Activated naive CD4-positive, alpha-beta T cell treated with anti-CD3 and anti-CD28 coated beads for 36 hours (primary cell): ENCODE measurements at regions of chr4 and their contacts with region 1.

Region 1: DNA sequence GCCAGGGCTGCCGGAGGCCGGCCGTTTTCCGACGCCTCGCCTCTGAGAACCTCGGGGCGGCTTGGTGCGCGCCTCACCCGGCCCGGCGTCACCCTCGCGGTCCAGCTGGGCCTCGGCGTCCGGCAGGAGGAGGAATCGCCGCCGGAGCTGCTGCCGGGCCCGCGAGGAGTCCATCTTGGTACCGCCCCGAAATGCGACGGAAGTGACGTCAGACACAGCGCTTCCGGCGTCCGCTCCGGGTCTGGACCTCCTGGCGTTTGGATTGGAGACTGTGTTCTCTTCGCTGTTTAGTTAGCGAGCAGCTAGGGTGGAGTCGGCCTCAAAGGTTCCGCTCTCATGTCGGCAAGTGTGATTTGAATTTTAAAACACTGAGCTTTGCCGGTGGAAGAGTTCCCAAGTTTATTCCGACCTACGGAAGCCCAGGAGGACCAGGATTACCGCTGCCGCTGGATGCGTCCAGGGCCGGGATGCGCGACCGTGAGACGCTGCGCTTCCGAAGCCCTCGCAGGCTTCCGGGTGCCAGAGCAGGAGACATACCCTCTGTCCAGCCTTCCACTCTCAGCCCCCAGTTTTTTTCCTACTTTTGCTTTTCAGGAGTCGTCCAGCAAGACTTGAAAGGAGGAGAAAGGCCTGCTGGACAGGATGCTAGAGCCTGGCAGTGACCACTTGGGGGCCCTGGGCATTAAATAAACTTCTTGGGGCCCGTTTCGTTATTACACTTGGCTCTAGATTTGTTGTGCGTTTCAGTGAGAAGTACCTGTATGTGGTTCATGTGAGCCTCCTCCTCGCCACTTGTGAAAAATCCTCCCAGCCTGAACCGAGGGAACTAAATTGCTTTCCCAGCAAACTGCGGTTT is at the start of gene TMEM128:
- DNase-seq: peak; percentile 94
- H3K4me3 Mint-ChIP-seq: peak within 1 kb of the TSS; percentile 95
- H3K27ac Mint-ChIP-seq: peak within 1 kb of the TSS; percentile 97
- H3K4me1 Mint-ChIP-seq: peaks cover 27% of the 10 kb centered on the region
- H3K27me3 Mint-ChIP-seq: no peaks in the 10 kb centered on the region
- total RNA-seq, gene TMEM128: 21.7 to 22.0 TPM

Region 2: DNA sequence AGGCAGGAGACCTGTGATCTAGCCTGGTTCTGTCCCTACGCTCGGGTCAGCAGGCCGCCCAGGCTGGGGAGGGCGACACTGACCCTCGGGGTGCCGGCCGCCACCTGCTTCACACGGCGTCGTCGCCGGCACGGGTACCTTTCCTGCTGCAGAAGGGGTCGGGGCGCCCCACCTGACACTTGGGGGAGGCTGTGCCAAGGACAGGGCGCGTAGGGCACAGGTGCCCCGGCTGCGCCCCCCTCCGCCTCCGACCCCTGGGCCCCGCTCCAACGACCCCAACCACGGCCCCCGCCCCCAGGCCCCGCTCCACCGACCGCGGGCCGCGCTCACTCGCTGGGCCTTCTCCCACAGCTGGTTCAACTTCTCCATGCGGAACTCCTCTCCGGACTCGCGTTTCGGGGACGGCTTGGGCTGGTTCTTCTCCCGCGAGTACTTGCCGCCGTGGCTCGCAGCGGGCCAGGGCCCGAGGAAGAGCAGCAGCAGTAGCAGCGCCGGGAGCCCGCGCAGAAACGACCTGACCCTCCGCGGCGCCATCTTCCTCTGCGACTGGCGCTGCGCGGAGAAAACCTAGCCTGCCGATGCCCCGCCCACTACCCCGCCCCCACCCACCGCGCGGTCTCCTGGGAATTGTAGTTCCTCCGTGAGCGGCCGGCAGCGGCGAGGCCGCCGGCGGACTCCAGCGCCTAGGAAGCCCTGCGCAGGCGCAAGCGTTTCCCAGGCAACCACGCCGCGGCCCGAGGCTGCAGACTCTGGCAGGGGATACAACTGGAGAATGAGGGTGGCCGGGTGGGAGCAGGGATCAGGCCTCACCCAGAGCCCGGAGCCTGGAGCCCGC is 716.2 kb before region 1 on chr4 and contains the start of gene LRPAP1:
- CTCF ChIA-PET with region 1: no interaction called
- intact Hi-C with region 1: loop called (anchors 5 kb)
- DNase-seq: peak; percentile 83
- H3K4me3 Mint-ChIP-seq: peak within 1 kb of the TSS; percentile 100
- H3K27ac Mint-ChIP-seq: peak within 1 kb of the TSS; percentile 90
- H3K4me1 Mint-ChIP-seq: peaks cover 32% of the 10 kb centered on the region
- H3K27me3 Mint-ChIP-seq: peaks cover 6% of the 10 kb centered on the region
- total RNA-seq, gene LRPAP1: 50.2 TPM

Region 3: GRCh38 chr4:4200624-4201023 is 47.6 kb before region 1 on chr4:
- CTCF ChIA-PET with region 1: no interaction called
- intact Hi-C with region 1: no loop called
- DNase-seq: no peak
- H3K4me3 Mint-ChIP-seq: no peak overlapping the region
- H3K27ac Mint-ChIP-seq: no peak overlapping the region
- H3K4me1 Mint-ChIP-seq: no peaks in the 10 kb centered on the region
- H3K27me3 Mint-ChIP-seq: peaks cover 13% of the 10 kb centered on the region

Region 4: DNA sequence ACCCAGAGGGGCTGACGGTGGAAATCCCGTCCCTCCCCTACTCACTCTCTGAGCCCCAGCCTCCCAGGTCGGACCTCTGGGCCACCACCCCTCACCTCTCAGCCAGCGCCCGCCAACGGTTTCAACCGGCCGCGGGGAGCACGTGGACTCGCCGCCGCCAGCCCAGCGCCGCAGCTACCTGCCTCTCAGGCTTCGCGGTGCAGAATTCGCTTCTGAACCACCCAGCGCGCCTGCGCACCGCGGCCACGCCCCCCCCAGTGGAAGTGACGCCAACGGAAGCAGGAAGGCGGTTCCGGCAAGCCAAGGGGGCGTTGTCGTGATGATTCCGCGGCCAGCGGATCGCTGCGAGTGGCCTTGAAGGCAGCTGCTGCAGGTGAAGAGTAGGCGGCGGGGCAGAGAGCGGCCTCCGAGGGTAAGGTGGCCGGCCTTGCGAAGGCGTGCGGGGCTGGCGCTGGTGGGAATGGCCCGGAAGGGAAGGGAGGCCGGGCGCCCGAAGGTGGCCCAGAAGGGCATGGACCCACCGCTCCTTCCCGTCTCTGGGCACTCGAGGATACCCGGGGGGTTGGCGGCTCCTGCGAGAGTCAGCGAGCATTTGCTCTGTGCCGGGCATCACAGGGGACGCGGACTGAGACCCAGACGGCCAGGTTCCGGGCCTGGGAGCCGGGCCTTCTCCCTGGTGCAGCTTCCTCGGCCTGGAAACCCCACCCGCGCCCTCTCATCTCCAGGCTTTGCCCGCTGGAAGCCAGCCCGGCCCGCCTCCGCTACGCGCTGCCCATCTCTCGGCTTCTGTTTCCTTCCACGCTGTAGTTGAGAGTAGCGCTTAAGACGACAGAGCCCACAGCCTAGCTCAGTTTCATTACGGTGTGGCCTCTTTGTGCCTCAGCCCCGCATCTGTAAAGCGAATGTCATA is 41.9 kb after region 1 on chr4 and contains the starts of genes LYAR and ZBTB49:
- CTCF ChIA-PET with region 1: no interaction called
- intact Hi-C with region 1: loop called (anchors 1 kb)
- DNase-seq: peak; percentile 96
- H3K4me3 Mint-ChIP-seq: peak within 1 kb of the TSS; percentile 95
- H3K27ac Mint-ChIP-seq: peak within 1 kb of the TSS; percentile 78
- H3K4me1 Mint-ChIP-seq: peaks cover 55% of the 10 kb centered on the region
- H3K27me3 Mint-ChIP-seq: no peaks in the 10 kb centered on the region
- total RNA-seq, gene LYAR: 42.3 to 42.4 TPM
- total RNA-seq, gene ZBTB49: 4.2 to 4.5 TPM

Region 5: DNA sequence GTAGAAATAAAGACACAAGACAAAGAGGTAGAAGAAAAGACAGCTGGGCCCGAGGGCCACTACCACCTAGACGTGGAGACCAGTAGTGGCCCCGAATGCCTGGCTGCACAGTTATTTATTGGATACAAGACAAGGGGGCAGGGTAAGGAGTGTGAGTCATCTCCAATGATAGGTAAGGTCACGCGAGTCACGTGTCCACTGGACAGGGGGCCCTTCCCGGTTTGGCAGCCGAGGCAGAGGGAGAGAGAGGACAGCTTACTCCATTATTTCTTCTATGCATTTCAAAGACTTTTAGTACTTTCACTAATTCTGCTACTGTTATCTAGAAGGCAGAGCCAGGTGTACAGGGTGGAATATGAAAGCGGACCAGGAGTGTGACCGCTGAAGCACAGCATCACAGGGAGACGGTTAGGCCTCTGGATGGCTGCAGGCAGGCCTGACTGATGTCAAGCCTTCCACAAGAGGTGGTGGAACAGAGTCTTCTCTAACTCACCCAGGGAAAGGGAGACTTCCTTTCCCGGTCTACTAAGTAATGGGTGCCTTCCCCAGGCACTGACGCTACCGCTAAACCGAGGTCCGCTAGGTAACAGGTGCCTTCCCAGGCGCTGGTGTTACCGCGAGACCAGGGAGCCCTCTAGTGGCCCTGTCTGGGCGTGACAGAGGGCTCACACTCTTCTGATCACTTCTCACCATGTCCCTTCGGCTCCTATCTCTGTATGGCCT is 86.7 kb after region 1 on chr4:
- CTCF ChIA-PET with region 1: interaction called, 15 read pairs
- intact Hi-C with region 1: loop called (anchors 1 kb)
- DNase-seq: peak; percentile 88
- H3K4me3 Mint-ChIP-seq: no peak overlapping the region
- H3K27ac Mint-ChIP-seq: no peak overlapping the region
- H3K4me1 Mint-ChIP-seq: peaks cover 8% of the 10 kb centered on the region
- H3K27me3 Mint-ChIP-seq: no peaks in the 10 kb centered on the region

Region 6: GRCh38 chr4:4430492-4431197 is 182.4 kb after region 1 on chr4:
- CTCF ChIA-PET with region 1: interaction called, 3 read pairs
- intact Hi-C with region 1: loop called (anchors 2 kb)
- DNase-seq: peak; percentile 69
- H3K4me3 Mint-ChIP-seq: no peak overlapping the region
- H3K27ac Mint-ChIP-seq: no peak overlapping the region
- H3K4me1 Mint-ChIP-seq: peaks cover 5% of the 10 kb centered on the region
- H3K27me3 Mint-ChIP-seq: no peaks in the 10 kb centered on the region

Region 7: DNA sequence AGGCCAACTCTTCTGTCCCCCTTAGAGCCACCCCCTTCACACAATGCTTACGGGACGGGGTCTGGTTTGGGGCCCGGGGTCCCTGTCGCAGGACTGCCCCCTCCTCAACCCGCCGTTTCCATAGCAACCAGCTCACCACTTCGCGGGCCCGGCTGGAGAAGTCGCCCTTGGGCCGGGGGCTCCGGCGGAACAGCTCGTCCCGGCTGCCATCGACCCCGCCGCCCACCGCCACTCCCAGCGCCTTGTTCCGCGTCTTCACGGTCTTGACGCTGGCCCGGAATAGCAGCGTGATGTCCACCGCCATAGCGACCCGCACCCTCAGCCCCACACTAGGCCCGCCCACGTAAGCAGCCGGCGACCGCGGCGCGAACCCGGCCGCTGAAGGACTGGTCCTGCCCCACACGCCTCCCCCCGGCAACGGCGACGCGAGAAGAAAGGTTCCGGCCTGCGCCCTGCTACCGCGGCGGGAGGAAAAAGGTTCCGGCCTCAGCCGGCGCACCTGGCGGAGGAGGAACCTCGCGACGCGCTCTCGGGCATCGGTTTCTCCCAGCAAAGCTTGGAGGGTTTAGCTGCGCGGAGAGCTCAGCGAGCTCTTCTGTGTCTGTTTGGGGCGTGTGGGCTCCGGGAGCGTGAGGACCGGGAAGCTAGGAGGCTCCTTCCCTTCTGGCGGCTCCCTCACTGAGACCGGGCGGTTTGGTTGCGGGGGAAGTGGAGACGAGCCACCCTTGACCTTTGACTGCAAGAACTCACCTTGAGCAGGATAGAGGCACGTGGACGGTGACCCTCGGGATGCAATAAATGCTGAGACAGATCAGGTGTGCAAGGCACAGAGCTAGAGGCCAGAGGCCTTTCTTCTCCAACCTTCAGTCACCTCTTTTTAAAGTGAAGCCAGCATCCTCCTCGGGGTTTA is 293.7 kb after region 1 on chr4 and contains the start of gene STX18:
- CTCF ChIA-PET with region 1: no interaction called
- intact Hi-C with region 1: loop called (anchors 1 kb)
- DNase-seq: peak; percentile 89
- H3K4me3 Mint-ChIP-seq: peak within 1 kb of the TSS; percentile 92
- H3K27ac Mint-ChIP-seq: peak within 1 kb of the TSS; percentile 87
- H3K4me1 Mint-ChIP-seq: peaks cover 43% of the 10 kb centered on the region
- H3K27me3 Mint-ChIP-seq: no peaks in the 10 kb centered on the region
- total RNA-seq, gene STX18: 18.3 to 19.0 TPM